ENCODE measurements at regions of chr2 and their contacts with region 1.

Region 1: DNA sequence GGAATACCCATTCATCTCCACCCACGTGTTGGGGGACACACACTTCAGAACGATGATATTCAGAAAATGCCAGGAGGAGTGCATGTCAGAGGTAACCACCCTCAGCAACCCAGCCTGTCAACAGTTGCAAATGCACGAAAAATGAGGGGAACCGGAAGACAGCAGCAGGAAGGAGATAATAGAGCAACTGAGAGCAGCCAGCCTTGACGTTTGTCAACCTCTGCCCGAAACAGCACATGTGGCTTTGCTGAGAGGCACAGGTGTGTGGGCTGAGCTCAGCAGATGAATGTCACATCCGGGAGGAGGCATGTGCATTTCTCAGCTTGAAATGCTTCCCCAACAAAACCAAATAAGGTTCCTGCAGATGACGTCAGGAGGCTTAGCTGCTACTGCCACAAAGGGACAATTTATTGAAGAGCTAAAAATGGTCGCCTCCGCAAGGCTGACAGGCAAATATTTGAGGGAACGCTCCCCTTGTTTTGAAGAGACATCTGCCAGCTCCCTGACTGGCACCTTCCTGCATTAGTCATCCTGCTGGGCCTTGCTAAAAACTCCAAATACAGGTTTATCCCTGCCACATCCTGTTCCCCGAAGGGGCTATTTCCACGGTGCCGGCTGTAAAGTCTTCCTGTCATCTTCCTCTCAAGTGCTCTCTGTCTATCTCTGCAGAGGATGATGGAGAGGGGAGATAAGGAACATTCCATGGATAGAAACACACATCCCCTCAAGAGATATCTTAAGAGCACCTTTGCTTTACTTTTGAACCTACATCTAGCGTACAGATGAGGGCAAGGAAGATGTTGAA is 418.9 kb downstream of the NBAS start:
- DNase-seq: peak; percentile 98
- H3K4me3 ChIP-seq: peak overlapping the region; percentile 42
- H3K27ac ChIP-seq: peak overlapping the region; percentile 81
- H3K4me1 ChIP-seq: peaks cover 30% of the 10 kb centered on the region
- CTCF ChIP-seq: no peak

Region 2: GRCh38 chr2:15154297-15154696 is 12.0 kb after region 1 on chr2:
- CTCF ChIA-PET with region 1: interaction called, 3 read pairs
- POLR2A ChIA-PET with region 1: interaction called, 11 read pairs
- intact Hi-C with region 1: no loop called
- DNase-seq: no peak
- H3K4me3 ChIP-seq: no peak overlapping the region
- H3K27ac ChIP-seq: no peak overlapping the region
- H3K4me1 ChIP-seq: peaks cover 7% of the 10 kb centered on the region
- CTCF ChIP-seq: no peak

Region 3: GRCh38 chr2:15177103-15177502 is 34.8 kb after region 1 on chr2:
- CTCF ChIA-PET with region 1: no interaction called
- POLR2A ChIA-PET with region 1: no interaction called
- intact Hi-C with region 1: no loop called
- DNase-seq: no peak
- H3K4me3 ChIP-seq: no peak overlapping the region
- H3K27ac ChIP-seq: no peak overlapping the region
- H3K4me1 ChIP-seq: no peaks in the 10 kb centered on the region
- CTCF ChIP-seq: no peak

Region 4: GRCh38 chr2:15591692-15592463 is 449.6 kb after region 1 on chr2 and contains the start of gene DDX1:
- CTCF ChIA-PET with region 1: no interaction called
- POLR2A ChIA-PET with region 1: interaction called, 5 read pairs
- intact Hi-C with region 1: loop called (anchors 1 kb)
- DNase-seq: peak; percentile 90
- H3K4me3 ChIP-seq: peak within 1 kb of the TSS; percentile 89
- H3K27ac ChIP-seq: peak within 1 kb of the TSS; percentile 51
- H3K4me1 ChIP-seq: peaks cover 21% of the 10 kb centered on the region
- CTCF ChIP-seq: 0 out of 2 replicates have a peak, but pooled peaks have one; percentile 16
- total RNA-seq, gene DDX1: 40.5 and 42.7 TPM in 2 replicates

Measured in OCI-LY7 (cell line).